Activated B cell treated with CpG ODN at 0.5 μM for 24 hours (primary cell): ENCODE measurements at regions of chr9 and their contacts with region 1.

Region 1: GRCh38 chr9:134391314-134392231 is 65.3 kb downstream of the RXRA start:
- DNase-seq: peak; percentile 62
- ATAC-seq: peak; percentile 59
- H3K4me3 Mint-ChIP-seq: peak overlapping the region; percentile 81
- H3K27ac Mint-ChIP-seq: peak overlapping the region; percentile 98
- H3K4me1 Mint-ChIP-seq: peaks cover 66% of the 10 kb centered on the region
- H3K27me3 Mint-ChIP-seq: no peaks in the 10 kb centered on the region
- CTCF ChIP-seq: no peak

Region 2: GRCh38 chr9:134356570-134357504 is 34.7 kb before region 1 on chr9:
- CTCF ChIA-PET with region 1: no interaction called
- POLR2A ChIA-PET with region 1: no interaction called
- intact Hi-C with region 1: no loop called
- DNase-seq: no peak
- ATAC-seq: no peak
- H3K4me3 Mint-ChIP-seq: no peak overlapping the region
- H3K27ac Mint-ChIP-seq: no peak overlapping the region
- H3K4me1 Mint-ChIP-seq: no peaks in the 10 kb centered on the region
- H3K27me3 Mint-ChIP-seq: no peaks in the 10 kb centered on the region
- CTCF ChIP-seq: no peak

Region 3: GRCh38 chr9:134372621-134373267 is 18.8 kb before region 1 on chr9:
- CTCF ChIA-PET with region 1: no interaction called
- POLR2A ChIA-PET with region 1: no interaction called
- intact Hi-C with region 1: no loop called
- DNase-seq: no peak
- ATAC-seq: no peak
- H3K4me3 Mint-ChIP-seq: no peak overlapping the region
- H3K27ac Mint-ChIP-seq: no peak overlapping the region
- H3K4me1 Mint-ChIP-seq: peaks cover 11% of the 10 kb centered on the region
- H3K27me3 Mint-ChIP-seq: no peaks in the 10 kb centered on the region
- CTCF ChIP-seq: no peak

Region 4: DNA sequence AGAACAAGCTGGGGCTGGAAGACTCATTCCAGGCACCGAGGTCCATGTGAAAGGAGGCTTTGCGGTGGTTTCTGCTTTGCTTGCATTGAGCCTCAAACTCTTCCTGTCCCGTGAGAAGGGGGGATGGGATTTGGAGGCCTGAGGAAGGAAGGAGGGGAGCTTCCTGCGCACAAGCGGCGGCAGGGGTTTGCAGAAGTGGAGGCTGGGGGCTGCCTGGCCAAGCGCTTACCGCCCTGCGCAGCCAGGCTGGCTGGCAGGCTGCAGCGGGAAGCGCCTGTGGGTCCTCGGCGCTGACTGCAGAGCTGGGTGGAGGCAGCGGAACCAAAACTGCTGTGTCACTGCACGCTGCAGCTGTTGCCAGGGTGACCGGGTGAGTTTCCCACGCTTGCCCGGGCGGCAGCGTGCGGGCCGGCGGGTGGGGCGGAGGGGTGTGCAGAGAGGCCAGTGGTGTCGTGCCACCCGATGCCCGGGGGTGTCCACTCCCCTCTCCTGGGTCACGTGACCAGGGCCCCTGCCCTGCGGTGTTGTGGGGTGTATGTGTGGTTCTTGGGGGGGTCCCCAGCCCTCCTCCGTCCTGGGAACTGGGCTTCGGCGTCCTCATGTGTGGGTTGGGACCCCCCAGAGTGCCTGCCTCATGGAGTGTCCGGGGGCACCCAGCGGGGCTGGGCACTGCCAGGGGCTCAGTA is 15.7 kb after region 1 on chr9:
- CTCF ChIA-PET with region 1: interaction called, 6 read pairs
- POLR2A ChIA-PET with region 1: interaction called, 27 read pairs
- intact Hi-C with region 1: loop called (anchors 1 kb)
- DNase-seq: peak; percentile 80
- ATAC-seq: peak; percentile 88
- H3K4me3 Mint-ChIP-seq: peak overlapping the region; percentile 59
- H3K27ac Mint-ChIP-seq: peak overlapping the region; percentile 35
- H3K4me1 Mint-ChIP-seq: peaks cover 55% of the 10 kb centered on the region
- H3K27me3 Mint-ChIP-seq: no peaks in the 10 kb centered on the region
- CTCF ChIP-seq: no peak